Psoas muscle (tissue), 8 donors: ENCODE measurements at regions of chr5 and their contacts with region 1.

Region 1: GRCh38 chr5:108260117-108260857 is 121.6 kb downstream of the FBXL17 start:
- DNase-seq: peak; percentile 49 to 71
- ATAC-seq: peak; percentile 75 to 94 (median 91)
- H3K4me3 ChIP-seq: peak overlapping the region; percentile 40
- H3K27ac ChIP-seq: no peak overlapping the region
- H3K4me1 ChIP-seq: peaks cover 32% of the 10 kb centered on the region
- H3K27me3 ChIP-seq: no peaks in the 10 kb centered on the region
- CTCF ChIP-seq: peak; percentile 96

Region 2: DNA sequence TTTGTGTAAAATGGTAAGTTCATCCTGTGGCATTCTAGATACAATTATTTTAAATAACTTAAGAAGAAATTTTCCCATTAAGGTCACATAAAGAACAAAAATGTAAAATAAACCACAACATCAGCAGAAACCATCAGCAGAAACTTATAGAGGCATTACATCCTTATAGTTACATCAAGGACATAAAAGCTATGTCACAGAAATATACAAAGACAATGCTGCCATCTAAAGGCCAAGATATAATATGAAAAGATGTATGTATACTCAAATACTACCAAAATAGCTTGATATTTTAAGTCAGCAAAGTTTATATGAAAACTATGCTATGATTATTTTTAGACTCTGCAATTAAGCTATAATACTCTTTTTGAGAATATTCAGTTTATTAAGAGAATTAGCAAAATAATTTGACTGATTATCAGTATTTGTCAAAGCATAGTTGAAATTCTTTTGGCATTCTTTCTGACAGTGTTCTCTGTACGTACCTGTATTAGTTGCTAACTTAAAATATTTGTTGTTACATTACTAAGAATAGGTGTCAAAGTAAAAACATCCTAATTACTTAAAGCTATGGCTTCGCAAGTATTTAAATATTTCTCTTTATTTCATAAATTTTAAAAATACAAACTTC is 85.4 kb after region 1 on chr5:
- intact Hi-C with region 1: loop called (anchors 2 to 5 kb)
- DNase-seq: no peak
- ATAC-seq: peak in 2 of 4 donors; percentile 50 to 69
- H3K4me3 ChIP-seq: no peak overlapping the region
- H3K27ac ChIP-seq: no peak overlapping the region
- H3K4me1 ChIP-seq: peaks cover 26% of the 10 kb centered on the region
- H3K27me3 ChIP-seq: no peaks in the 10 kb centered on the region
- CTCF ChIP-seq: peak; percentile 49

Region 3: DNA sequence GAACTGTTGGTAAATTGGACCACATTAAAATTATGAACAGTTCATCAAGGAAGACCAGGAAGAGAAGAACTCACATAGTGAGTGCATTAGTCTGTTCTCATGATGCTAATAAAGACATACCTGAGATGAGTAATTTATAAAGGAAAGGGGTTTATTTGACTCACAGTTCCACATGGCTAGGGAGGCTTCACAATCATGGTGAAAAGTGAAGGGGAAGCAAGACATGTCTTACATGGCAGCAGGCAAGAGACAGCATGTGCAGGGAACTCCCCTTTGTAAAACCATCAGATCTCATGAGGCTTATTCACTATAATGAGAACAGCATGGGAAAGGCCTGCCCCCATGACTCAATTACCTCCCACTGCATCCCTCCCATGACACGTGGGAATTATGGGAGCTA is 1293.6 kb after region 1 on chr5:
- intact Hi-C with region 1: no loop called
- DNase-seq: no peak
- ATAC-seq: no peak
- H3K4me3 ChIP-seq: no peak overlapping the region
- H3K27ac ChIP-seq: no peak overlapping the region
- H3K4me1 ChIP-seq: no peaks in the 10 kb centered on the region
- H3K27me3 ChIP-seq: no peaks in the 10 kb centered on the region
- CTCF ChIP-seq: no peak